ENCODE measurements at regions of chr4 and their contacts with region 1.

Region 1: DNA sequence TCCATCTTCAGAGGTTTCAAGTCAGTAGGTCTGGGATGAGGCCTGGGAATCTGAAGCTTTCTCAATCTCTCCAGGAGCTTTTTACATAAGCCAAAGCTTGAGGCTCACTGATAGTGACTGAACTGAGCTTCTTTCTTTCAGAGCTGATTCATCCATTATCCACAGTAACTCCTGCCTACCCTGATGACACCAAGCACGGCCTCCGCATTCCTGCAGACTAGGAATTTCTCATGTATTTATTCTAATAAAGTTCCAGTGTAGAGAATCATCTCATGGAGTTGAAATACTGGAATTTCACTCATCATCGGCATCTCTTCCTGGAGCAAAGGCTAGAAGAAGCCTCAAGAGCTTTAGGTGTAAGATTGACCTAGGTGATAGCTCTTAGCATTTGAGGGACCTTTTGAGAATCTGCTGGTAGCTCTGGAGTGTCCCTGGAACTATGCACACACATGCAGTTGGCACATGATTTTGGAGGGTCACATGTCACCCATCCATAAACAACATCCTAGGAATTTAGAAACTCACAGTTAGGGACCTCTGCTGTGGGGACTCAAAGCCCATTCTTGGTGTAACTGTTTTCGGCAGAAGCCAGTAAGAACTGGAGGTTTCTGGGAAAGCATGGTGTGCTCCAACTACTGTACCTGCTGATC is 12.2 kb upstream of the DCTD start:
- DNase-seq: no peak
- ATAC-seq: no peak
- H3K4me3 ChIP-seq: no peak overlapping the region
- H3K4me3 Mint-ChIP-seq: no peak overlapping the region
- H3K27ac ChIP-seq: no peak overlapping the region
- H3K27ac Mint-ChIP-seq: no peak overlapping the region
- H3K4me1 ChIP-seq: peaks cover 0 to 5% of the 10 kb centered on the region in 2 experiments
- H3K4me1 Mint-ChIP-seq: peaks cover 0 to 2% (median 0%) of the 10 kb centered on the region in 3 donors
- H3K27me3 ChIP-seq: peaks cover 0 to 17% of the 10 kb centered on the region in 2 experiments
- H3K27me3 Mint-ChIP-seq: peaks cover 5 to 12% of the 10 kb centered on the region in 2 donors

Region 2: DNA sequence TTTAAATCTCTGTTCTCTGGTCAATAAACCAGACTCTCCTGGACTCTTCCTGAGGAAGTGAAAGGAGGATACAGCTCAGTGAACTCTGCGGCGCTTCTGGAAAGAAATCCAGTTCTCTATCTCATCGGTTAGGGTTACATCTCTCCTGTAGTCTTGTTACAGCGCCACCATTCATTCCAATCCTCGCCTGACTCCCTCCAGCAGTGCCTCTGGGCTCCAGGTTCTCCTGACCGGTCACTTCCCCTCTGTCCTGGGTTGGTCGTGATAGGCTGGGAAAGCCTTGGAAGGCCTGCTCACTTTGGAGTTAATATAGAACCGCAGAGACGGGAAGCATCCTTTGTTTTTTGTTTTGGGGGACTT is 878.7 kb after region 1 on chr4:
- CTCF ChIA-PET with region 1: interaction called in 1 of 2 experiments, 10 read pairs
- POLR2A ChIA-PET with region 1: no interaction called
- DNase-seq: no peak
- ATAC-seq: no peak
- H3K4me3 ChIP-seq: no peak overlapping the region
- H3K4me3 Mint-ChIP-seq: no peak overlapping the region
- H3K27ac ChIP-seq: no peak overlapping the region
- H3K27ac Mint-ChIP-seq: no peak overlapping the region
- H3K4me1 ChIP-seq: no peaks in the 10 kb centered on the region
- H3K4me1 Mint-ChIP-seq: no peaks in the 10 kb centered on the region
- H3K27me3 ChIP-seq: peaks cover 0 to 7% of the 10 kb centered on the region in 2 experiments
- H3K27me3 Mint-ChIP-seq: peaks cover 3 to 24% of the 10 kb centered on the region in 2 donors

Measured in T-cell (primary cell).